ENCODE measurements at regions of chr1 and their contacts with region 1.

Region 1: GRCh38 chr1:35202048-35202719 is 9.2 kb upstream of the SFPQ start:
- DNase-seq: peak; percentile 69
- ATAC-seq: peak; percentile 97
- H3K4me3 ChIP-seq: no peak overlapping the region
- H3K27ac ChIP-seq: no peak overlapping the region
- H3K4me1 ChIP-seq: peaks cover 11% of the 10 kb centered on the region
- H3K27me3 ChIP-seq: no peaks in the 10 kb centered on the region
- CTCF ChIP-seq: peak; percentile 90
- EP300 ChIP-seq: no peak
- POLR2A ChIP-seq: no peak
- RAD21 ChIP-seq: peak; percentile 59

Region 2: DNA sequence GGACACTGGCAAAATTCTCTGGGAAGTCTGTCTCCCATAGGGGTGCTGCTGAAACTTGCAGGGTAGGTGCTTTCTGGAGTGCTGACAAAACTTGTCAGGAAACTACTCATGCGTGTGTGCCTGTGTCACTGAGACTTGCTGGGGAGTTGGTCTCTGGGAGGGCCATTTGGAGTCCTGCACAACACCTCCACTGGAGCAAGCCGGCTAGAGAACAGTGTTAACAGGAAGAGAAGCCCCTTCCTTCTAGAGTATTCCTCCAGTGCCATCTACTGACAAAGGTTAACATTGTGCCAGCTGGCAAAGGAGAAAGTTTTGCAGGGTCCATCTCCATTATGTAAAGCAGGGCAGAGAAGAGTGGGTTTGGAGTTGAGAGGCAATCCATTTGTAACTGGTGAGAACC is 96.3 kb after region 1 on chr1:
- CTCF ChIA-PET with region 1: interaction called, 16 read pairs
- POLR2A ChIA-PET with region 1: no interaction called
- in situ Hi-C with region 1: no loop called
- intact Hi-C with region 1: loop called (anchors 1 kb)
- DNase-seq: peak; percentile 38
- ATAC-seq: peak; percentile 80
- H3K4me3 ChIP-seq: no peak overlapping the region
- H3K27ac ChIP-seq: no peak overlapping the region
- H3K4me1 ChIP-seq: no peaks in the 10 kb centered on the region
- H3K27me3 ChIP-seq: no peaks in the 10 kb centered on the region
- CTCF ChIP-seq: peak; percentile 65
- EP300 ChIP-seq: no peak
- POLR2A ChIP-seq: no peak
- RAD21 ChIP-seq: peak; percentile 45; the same call in 1 of the 2 replicates

Region 3: DNA sequence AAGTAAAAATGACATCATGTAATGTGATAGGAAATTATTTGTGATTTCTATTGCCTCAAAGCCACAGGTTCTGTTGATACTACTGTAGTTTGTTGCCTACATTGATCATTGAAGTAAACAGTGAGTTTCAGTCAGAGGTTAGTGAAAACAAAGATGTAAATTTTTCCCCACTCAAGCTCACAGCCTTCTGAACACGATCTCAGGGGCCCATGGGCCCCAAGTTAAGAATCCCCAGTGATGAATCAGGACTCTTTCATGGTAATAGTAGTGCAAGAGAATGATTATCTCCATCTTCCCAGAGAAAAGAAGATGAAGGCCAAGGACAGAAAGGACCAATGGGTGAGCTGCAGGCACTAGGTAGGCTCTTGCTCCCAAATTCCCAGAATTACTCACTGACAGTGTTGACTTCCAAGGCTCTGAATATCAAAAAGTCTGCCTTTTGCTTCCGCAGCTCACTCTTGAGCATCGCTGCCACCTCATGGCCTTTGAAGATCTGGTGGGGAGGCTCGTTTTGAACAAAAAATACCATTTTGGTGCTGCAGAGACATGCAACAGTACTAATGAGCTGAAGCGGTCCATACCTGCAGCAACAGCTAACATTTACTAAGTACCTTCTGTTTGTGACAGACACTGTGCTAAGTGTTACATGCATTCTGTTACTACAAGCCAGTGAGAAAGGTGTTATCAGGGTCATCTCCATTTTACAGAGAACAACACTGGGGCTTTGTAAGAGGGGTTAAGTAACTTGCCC is 241.8 kb after region 1 on chr1:
- CTCF ChIA-PET with region 1: no interaction called
- POLR2A ChIA-PET with region 1: no interaction called
- in situ Hi-C with region 1: no loop called
- intact Hi-C with region 1: loop called (anchors 1 kb)
- DNase-seq: peak; percentile 61
- ATAC-seq: peak; percentile 80
- H3K4me3 ChIP-seq: no peak overlapping the region
- H3K27ac ChIP-seq: peak overlapping the region; percentile 25
- H3K4me1 ChIP-seq: peaks cover 25% of the 10 kb centered on the region
- H3K27me3 ChIP-seq: no peaks in the 10 kb centered on the region
- CTCF ChIP-seq: peak; percentile 52
- EP300 ChIP-seq: peak in 1 of 2 experiments; percentile 19; a peak in 1 of 4 replicates
- POLR2A ChIP-seq: no peak
- RAD21 ChIP-seq: no peak

Region 4: DNA sequence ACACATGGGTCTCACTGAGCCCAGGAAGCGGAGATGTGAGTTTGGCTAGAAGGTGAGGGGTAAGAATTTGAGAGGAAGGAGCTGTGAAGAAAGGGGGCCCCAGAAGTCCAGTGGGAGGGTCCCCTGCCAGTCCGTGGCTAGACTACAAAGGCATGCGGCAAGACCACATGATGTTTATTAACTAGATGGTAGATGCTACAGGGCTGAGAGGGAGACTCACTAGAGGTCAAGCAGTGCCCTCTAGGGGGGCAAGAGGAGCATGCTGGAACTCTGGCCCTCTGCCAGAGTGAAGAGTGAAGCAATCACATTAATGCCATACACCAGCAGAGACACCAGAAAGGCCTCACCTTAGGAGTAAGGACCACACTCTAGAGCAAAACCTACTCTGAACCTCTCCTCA is 342.8 kb after region 1 on chr1:
- CTCF ChIA-PET with region 1: no interaction called
- POLR2A ChIA-PET with region 1: no interaction called
- in situ Hi-C with region 1: loop called (anchors 10 kb)
- intact Hi-C with region 1: loop called (anchors 1 kb)
- DNase-seq: peak; percentile 85
- ATAC-seq: peak; percentile 97
- H3K4me3 ChIP-seq: no peak overlapping the region
- H3K27ac ChIP-seq: no peak overlapping the region
- H3K4me1 ChIP-seq: peaks cover 16% of the 10 kb centered on the region
- H3K27me3 ChIP-seq: no peaks in the 10 kb centered on the region
- CTCF ChIP-seq: peak; percentile 87
- EP300 ChIP-seq: no peak
- POLR2A ChIP-seq: no peak
- RAD21 ChIP-seq: peak; percentile 70